ENCODE measurements at regions of chr12 and their contacts with region 1.

Region 1: DNA sequence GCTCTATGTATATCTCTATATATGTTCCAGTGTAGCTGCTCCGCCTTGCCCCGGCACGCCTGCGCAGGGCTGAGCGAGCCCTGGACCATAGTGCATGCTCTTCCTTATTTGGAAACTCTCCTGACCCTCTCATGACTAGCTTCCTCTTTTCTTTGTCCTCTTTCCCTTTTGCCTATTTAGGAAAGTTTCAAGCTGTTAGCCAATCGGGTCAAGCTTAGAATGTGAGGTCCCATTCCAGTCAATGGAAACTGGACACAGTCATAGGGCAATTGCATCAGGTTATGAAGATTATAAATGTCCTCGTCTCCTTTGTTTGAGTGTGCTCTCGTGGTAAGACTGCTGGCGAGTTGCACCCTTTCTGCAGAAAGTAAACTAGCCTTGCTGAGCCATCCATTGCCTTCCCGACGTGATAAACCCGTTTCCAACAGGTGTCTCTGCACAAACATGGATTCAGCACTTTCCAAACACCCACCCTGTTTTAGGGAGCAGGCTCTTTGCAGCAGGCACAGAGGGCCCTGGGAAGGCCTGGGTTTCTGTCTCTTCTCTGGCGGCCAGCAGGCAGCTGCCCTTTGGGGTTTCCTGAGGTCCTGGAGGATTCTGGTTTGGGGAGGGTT is 30.9 kb downstream of the CCDC92 start:
- DNase-seq: no peak
- H3K4me3 ChIP-seq: no peak overlapping the region
- H3K27ac ChIP-seq: no peak overlapping the region
- H3K4me1 ChIP-seq: no peaks in the 10 kb centered on the region
- H3K27me3 ChIP-seq: no peaks in the 10 kb centered on the region
- CTCF ChIP-seq: no peak
- EP300 ChIP-seq: no peak
- POLR2A ChIP-seq: no peak

Region 2: GRCh38 chr12:123914726-123915345 is 26.9 kb before region 1 on chr12:
- in situ Hi-C with region 1: no loop called
- intact Hi-C with region 1: loop called (anchors 1 kb)
- DNase-seq: no peak
- H3K4me3 ChIP-seq: no peak overlapping the region
- H3K27ac ChIP-seq: no peak overlapping the region
- H3K4me1 ChIP-seq: peaks cover 0 to 8% (median 4%) of the 10 kb centered on the region in 4 donors
- H3K27me3 ChIP-seq: peaks cover 7% of the 10 kb centered on the region
- CTCF ChIP-seq: no peak
- EP300 ChIP-seq: no peak
- POLR2A ChIP-seq: no peak

Region 3: DNA sequence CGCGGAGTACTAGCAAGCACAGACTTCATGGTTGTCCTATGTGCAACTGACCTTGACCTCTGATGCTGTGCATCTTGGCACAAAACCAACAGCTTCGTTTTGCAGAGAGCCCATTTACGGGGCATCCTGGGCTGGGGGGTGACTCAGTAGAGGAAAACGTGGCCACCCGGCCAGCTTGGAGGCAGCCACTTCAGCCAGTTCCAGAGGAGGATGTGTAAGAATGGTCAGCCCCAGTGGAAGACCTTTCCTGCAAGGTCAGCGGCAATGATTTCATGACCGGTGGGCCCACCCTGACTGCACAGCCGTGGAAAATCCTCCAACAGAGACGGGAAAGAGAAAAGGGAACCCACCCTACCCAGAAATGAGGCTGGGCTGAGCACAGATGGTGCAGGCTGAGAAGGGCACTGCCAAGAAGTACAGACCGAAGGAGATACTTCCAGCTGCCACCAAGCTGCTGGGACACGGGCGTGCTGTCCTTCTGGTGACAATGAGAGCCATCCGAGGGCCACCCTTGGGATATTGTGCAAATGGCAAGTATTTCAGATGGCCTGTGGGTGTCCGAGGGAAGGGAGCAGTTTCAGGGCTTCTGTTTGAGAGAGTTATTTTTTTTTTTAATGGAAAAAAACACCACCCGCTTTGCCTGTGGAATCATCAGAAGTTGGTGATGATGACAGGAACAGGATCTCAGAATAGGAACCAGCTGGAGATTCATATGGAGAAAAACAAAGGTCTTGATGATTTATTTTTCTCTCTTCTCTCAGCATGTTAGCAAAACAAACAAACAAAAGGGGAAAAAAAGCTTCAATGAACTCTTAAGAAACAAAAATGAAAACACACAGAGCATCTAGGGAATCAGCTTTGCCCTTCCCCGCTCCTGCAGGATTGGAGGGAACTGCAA is 233.0 kb after region 1 on chr12:
- in situ Hi-C with region 1: no loop called
- intact Hi-C with region 1: no loop called
- DNase-seq: no peak
- H3K4me3 ChIP-seq: no peak overlapping the region
- H3K27ac ChIP-seq: no peak overlapping the region
- H3K4me1 ChIP-seq: no peaks in the 10 kb centered on the region
- H3K27me3 ChIP-seq: no peaks in the 10 kb centered on the region
- CTCF ChIP-seq: no peak
- EP300 ChIP-seq: no peak
- POLR2A ChIP-seq: no peak

Measured in transverse colon (tissue), 4 donors.